ENCODE measurements at regions of chrX and their contacts with region 1.

Region 1: DNA sequence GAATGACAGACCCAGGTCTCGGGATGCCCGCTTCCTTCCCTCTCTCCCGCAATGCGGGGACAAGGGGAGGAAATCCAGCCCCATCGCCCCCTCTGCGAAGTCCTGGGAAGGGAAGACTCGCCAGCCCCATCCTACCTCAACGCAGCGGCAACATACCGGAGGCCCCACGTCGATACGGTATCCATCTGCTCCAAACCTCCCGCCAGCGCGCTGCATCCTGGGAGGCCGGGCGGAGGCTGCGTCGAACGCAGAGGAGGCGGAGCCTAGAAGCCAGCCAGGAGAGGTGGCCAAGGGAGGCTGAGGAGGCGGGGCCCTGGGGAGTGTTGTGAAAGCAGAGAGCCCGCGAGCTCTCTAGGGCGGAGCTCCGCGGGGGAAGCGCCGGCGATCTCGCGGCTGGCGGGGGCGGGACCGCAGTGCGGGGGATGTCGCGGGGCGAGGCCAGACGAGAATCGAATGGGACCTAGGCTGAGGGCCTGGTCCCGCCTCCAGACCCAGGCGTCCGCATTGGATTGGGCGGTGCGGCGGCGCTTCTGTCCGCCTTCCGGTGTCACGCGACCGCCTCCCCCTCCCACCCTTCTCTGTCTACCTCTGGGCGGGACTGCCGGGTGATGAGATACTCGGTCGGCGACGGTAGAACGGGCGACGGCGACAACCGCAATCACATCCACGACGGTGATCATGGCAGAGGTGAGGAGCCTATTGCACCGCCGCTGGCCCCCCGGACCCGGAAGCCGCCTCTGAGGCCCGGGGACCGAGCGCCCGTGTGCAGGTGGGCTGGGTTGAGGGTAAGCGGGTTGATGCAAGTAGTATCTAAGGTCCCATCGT is at the starts of genes FANCB and MOSPD2:
- DNase-seq: peak; percentile 82
- ATAC-seq: peak; percentile 93
- H3K4me3 Mint-ChIP-seq: peak within 1 kb of the TSS; percentile 87
- H3K27ac Mint-ChIP-seq: peak within 1 kb of the TSS; percentile 83
- H3K4me1 Mint-ChIP-seq: peaks cover 7% of the 10 kb centered on the region
- H3K27me3 Mint-ChIP-seq: no peaks in the 10 kb centered on the region
- CTCF ChIP-seq: no peak
- total RNA-seq, gene FANCB: 3.9 and 4.0 TPM in 2 replicates
- total RNA-seq, gene MOSPD2: 15.6 and 19.7 TPM in 2 replicates

Region 2: GRCh38 chrX:14051416-14051815 is 821.6 kb before region 1 on chrX:
- CTCF ChIA-PET with region 1: no interaction called
- POLR2A ChIA-PET with region 1: no interaction called
- intact Hi-C with region 1: no loop called
- DNase-seq: no peak
- ATAC-seq: no peak
- H3K4me3 Mint-ChIP-seq: no peak overlapping the region
- H3K27ac Mint-ChIP-seq: no peak overlapping the region
- H3K4me1 Mint-ChIP-seq: no peaks in the 10 kb centered on the region
- H3K27me3 Mint-ChIP-seq: peaks cover 6% of the 10 kb centered on the region
- CTCF ChIP-seq: no peak

Region 3: GRCh38 chrX:14673764-14674163 is 199.3 kb before region 1 on chrX:
- CTCF ChIA-PET with region 1: no interaction called
- POLR2A ChIA-PET with region 1: no interaction called
- intact Hi-C with region 1: loop called (anchors 1 kb)
- DNase-seq: peak; percentile 12
- ATAC-seq: peak; percentile 90
- H3K4me3 Mint-ChIP-seq: peak overlapping the region; percentile 35
- H3K27ac Mint-ChIP-seq: peak overlapping the region; percentile 80
- H3K4me1 Mint-ChIP-seq: peaks cover 56% of the 10 kb centered on the region
- H3K27me3 Mint-ChIP-seq: no peaks in the 10 kb centered on the region
- CTCF ChIP-seq: no peak

Region 4: GRCh38 chrX:14899607-14900006 is 26.5 kb after region 1 on chrX:
- CTCF ChIA-PET with region 1: no interaction called
- POLR2A ChIA-PET with region 1: no interaction called
- intact Hi-C with region 1: loop called (anchors 1 kb)
- DNase-seq: no peak
- ATAC-seq: peak; percentile 82
- H3K4me3 Mint-ChIP-seq: no peak overlapping the region
- H3K27ac Mint-ChIP-seq: no peak overlapping the region
- H3K4me1 Mint-ChIP-seq: peaks cover 10% of the 10 kb centered on the region
- H3K27me3 Mint-ChIP-seq: no peaks in the 10 kb centered on the region
- CTCF ChIP-seq: no peak

Region 5: GRCh38 chrX:15059474-15059873 is 186.4 kb after region 1 on chrX:
- CTCF ChIA-PET with region 1: no interaction called
- POLR2A ChIA-PET with region 1: no interaction called
- intact Hi-C with region 1: no loop called
- DNase-seq: no peak
- ATAC-seq: no peak
- H3K4me3 Mint-ChIP-seq: no peak overlapping the region
- H3K27ac Mint-ChIP-seq: no peak overlapping the region
- H3K4me1 Mint-ChIP-seq: no peaks in the 10 kb centered on the region
- H3K27me3 Mint-ChIP-seq: no peaks in the 10 kb centered on the region
- CTCF ChIP-seq: no peak

Region 6: GRCh38 chrX:15930585-15930984 is 1057.5 kb after region 1 on chrX:
- CTCF ChIA-PET with region 1: no interaction called
- POLR2A ChIA-PET with region 1: no interaction called
- intact Hi-C with region 1: no loop called
- DNase-seq: no peak
- ATAC-seq: no peak
- H3K4me3 Mint-ChIP-seq: no peak overlapping the region
- H3K27ac Mint-ChIP-seq: no peak overlapping the region
- H3K4me1 Mint-ChIP-seq: peaks cover 14% of the 10 kb centered on the region
- H3K27me3 Mint-ChIP-seq: no peaks in the 10 kb centered on the region
- CTCF ChIP-seq: no peak

Region 7: DNA sequence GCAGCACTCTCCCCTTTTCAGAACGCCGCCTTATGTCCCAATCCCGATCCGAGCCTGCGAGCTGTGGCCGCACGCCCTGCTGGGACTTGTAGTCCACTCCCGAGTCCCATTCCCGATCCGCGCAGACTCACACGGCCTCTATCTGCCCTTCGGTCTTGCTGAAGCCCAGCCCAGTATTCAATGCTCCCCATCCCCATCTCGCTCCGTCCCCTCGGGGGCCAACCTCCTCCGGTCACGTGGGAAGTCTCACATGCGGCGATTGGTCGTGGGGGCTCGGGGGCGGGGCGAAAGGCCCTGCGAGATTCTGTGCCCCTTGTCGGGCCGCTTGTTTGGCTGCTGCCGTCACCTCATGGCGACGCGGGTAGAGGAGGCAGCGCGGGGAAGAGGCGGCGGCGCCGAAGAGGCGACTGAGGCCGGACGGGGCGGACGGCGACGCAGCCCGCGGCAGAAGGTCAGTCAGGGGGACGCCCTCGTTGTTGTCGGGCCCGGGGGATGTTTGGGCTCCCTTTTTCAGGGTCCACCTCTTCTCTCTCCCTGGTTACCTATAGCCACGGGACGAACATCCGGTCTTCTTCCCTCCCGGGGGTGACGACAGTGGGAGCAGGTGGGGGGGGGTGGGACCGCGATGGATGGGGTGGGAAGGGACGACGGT is 1913.2 kb after region 1 on chrX and contains the start of gene TXLNG:
- CTCF ChIA-PET with region 1: no interaction called
- POLR2A ChIA-PET with region 1: no interaction called
- intact Hi-C with region 1: loop called (anchors 5 kb)
- DNase-seq: peak; percentile 81
- ATAC-seq: peak; percentile 95
- H3K4me3 Mint-ChIP-seq: peak within 1 kb of the TSS; percentile 97
- H3K27ac Mint-ChIP-seq: peak within 1 kb of the TSS; percentile 90
- H3K4me1 Mint-ChIP-seq: peaks cover 18% of the 10 kb centered on the region
- H3K27me3 Mint-ChIP-seq: no peaks in the 10 kb centered on the region
- CTCF ChIP-seq: no peak
- total RNA-seq, gene TXLNG: 12.7 and 13.1 TPM in 2 replicates

Measured in activated B cell treated with CpG ODN at 0.5 μM for 24 hours (primary cell).